OCI-LY7 (cell line): ENCODE measurements at regions of chr1 and their contacts with region 1.

Region 1: GRCh38 chr1:4652631-4653327 is 1.6 kb upstream of the AJAP1 start:
- DNase-seq: peak; percentile 63
- H3K4me3 ChIP-seq: no peak overlapping the region
- H3K27ac ChIP-seq: no peak overlapping the region
- H3K4me1 ChIP-seq: peaks cover 27% of the 10 kb centered on the region
- CTCF ChIP-seq: peak; percentile 95

Region 2: DNA sequence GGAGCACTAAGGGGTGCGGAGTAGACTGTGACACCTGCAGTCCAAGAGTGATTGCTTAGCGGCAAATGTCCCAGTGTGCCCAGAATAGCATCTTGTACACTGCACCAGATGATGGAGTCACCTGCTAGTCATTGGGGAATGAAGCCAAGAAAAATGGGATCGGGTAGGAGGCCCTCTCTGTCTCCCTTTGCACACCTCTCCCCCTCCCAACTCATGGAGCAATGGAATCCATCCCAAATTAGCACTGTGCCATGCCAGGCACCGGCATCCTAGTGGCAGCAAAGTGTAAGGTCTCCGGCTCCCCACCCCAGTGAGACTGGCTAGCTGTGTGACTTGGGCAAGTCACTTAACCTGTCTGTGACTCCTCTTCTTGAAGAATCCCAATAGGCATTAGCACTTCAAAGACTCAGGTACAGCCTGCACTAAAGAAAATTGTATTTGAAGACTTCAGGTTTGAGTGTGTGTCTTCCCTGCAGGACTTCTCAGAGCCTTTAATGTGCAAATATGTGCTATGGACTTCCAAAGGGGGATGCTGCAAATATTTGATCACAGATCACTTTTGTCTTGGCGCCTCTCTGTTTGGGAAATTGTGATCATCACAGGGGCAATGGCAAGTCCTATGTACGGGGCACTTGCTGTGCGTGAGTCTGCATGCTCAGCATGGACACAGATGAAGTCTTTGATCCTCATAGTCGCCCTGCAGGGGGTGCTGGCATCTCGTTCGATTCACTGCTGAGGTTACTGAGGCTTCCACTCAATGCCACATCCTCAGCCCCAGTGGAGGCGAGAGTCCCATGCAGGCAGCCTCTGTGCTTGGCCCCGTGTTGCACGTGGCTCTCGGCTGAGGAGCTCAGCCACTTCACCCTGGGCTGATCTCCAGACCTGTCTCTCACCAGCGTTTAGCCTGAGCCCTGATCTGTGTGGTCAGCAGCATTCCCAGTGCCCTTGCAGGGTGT is 479.9 kb before region 1 on chr1:
- CTCF ChIA-PET with region 1: no interaction called
- POLR2A ChIA-PET with region 1: no interaction called
- intact Hi-C with region 1: loop called (anchors 1 kb)
- DNase-seq: peak; percentile 84
- H3K4me3 ChIP-seq: no peak overlapping the region
- H3K27ac ChIP-seq: no peak overlapping the region
- H3K4me1 ChIP-seq: peaks cover 23% of the 10 kb centered on the region
- CTCF ChIP-seq: peak; percentile 80

Region 3: GRCh38 chr1:4664606-4665005 is 11.8 kb after region 1 on chr1:
- CTCF ChIA-PET with region 1: no interaction called
- POLR2A ChIA-PET with region 1: no interaction called
- intact Hi-C with region 1: no loop called
- DNase-seq: no peak
- H3K4me3 ChIP-seq: no peak overlapping the region
- H3K27ac ChIP-seq: no peak overlapping the region
- H3K4me1 ChIP-seq: no peaks in the 10 kb centered on the region
- CTCF ChIP-seq: no peak

Region 4: DNA sequence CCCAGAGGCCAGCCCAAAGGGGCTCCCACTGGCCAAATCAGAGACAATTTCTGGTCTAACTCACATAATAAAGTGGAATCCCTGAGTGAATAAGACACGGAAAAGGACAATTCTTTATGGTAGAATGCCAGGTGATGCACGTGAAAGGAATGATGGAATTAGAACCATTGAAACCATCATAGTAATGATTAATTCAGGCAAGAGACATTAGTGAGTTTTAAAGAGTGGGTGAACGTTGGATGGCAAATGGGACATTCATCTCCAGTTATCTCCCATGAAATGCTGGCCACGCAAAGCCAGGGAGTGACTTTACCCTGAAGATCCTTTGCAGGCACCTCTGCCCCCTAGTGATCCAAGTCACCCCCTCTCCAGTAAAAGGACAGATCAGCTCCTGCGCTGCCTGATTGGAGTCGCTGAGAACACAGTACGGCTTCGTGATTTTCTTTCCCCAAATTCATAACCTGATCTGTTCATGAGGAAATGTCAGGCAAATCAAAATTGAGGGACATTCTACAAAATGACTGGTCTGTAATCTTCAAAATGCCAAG is 89.2 kb after region 1 on chr1:
- CTCF ChIA-PET with region 1: no interaction called
- POLR2A ChIA-PET with region 1: no interaction called
- intact Hi-C with region 1: loop called (anchors 2 kb)
- DNase-seq: no peak
- H3K4me3 ChIP-seq: no peak overlapping the region
- H3K27ac ChIP-seq: no peak overlapping the region
- H3K4me1 ChIP-seq: peaks cover 37% of the 10 kb centered on the region
- CTCF ChIP-seq: no peak

Region 5: DNA sequence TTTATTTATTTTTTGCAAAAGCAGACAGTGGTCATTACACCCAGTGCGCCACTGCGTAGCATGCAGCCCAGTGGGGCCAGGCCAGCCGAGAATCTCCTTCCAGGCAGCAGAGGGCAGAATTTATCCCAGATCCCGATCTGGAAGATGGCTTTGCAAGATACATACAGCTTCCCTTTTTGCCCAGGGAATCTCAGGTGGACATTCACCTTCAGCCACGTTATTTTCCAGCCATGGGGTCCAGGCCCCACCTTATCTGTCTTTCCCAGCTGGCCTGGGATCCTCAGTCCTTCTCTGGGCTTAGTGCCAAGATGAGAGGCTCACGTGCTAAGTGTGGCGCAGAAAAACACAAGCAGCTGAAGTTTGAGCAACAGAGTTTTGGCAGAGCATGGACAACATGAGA is 125.3 kb after region 1 on chr1:
- CTCF ChIA-PET with region 1: no interaction called
- POLR2A ChIA-PET with region 1: no interaction called
- intact Hi-C with region 1: loop called (anchors 5 kb)
- DNase-seq: peak; percentile 46
- H3K4me3 ChIP-seq: no peak overlapping the region
- H3K27ac ChIP-seq: no peak overlapping the region
- H3K4me1 ChIP-seq: peaks cover 5% of the 10 kb centered on the region
- CTCF ChIP-seq: peak; percentile 75

Region 6: DNA sequence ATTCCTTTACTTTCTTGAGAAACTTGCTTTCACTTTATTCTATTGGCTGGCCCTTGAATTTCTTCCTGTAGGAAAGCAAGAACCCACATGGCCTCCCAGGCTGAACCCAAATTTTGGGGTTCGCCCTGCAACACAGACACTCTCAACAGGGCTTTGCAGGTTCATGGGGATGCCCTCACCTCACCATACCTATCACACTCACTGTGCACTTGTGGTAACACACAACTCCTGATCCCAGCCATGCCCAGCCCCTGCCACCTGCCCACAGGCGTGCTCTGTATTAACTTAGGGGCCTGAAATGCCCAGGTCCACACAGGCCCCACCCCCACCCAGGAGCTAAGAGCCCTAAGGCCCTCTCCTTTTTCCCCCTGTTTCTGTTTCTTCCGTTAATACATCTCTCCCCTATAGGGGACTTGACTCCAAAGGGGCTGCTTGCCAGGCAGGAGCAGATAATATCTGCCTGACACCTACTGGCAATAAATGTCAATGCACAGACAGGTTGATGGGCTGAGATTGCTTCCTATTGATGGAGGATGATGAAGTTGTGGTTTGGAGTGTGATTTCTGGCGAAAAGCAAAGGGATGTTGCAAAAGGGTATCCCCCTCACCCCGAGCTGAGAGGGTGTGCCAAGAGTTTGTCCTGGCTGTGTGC is 173.1 kb after region 1 on chr1:
- CTCF ChIA-PET with region 1: interaction called, 3 read pairs
- POLR2A ChIA-PET with region 1: no interaction called
- intact Hi-C with region 1: loop called (anchors 1 kb)
- DNase-seq: peak; percentile 72
- H3K4me3 ChIP-seq: no peak overlapping the region
- H3K27ac ChIP-seq: no peak overlapping the region
- H3K4me1 ChIP-seq: peaks cover 14% of the 10 kb centered on the region
- CTCF ChIP-seq: peak; percentile 89

Region 7: GRCh38 chr1:5745776-5746610 is 1093.2 kb after region 1 on chr1:
- CTCF ChIA-PET with region 1: no interaction called
- POLR2A ChIA-PET with region 1: no interaction called
- intact Hi-C with region 1: loop called (anchors 10 kb)
- DNase-seq: peak; percentile 58
- H3K4me3 ChIP-seq: no peak overlapping the region
- H3K27ac ChIP-seq: no peak overlapping the region
- H3K4me1 ChIP-seq: no peaks in the 10 kb centered on the region
- CTCF ChIP-seq: peak; percentile 83